GM12878 (cell line): ENCODE measurements at regions of chr6 and their contacts with region 1.

Region 1: DNA sequence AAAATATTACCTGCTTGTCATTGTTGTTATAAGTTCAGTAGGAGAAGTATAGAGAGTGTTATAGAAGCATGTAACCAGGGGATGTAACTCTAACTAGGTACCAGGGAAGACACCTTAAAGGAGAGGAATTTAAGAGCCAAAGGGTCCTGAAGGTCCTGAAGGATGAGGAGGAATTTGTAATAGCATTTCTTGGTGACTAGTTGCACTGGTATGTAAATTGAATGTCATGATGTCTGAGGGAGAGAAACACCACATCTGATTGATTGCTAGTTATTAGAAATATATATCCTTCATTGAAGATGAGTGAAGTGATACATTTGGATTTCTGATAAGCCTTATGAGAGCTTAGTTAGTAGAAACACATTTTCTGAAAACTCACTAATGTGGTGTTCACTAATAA is 643.8 kb downstream of the RFPL4B start:
- DNase-seq: no peak
- ATAC-seq: no peak
- H3K4me3 ChIP-seq: no peak overlapping the region
- H3K27ac ChIP-seq: no peak overlapping the region
- H3K4me1 ChIP-seq: no peaks in the 10 kb centered on the region
- H3K27me3 ChIP-seq: no peaks in the 10 kb centered on the region
- CTCF ChIP-seq: no peak
- EP300 ChIP-seq: no peak
- POLR2A ChIP-seq: no peak
- RAD21 ChIP-seq: no peak

Region 2: DNA sequence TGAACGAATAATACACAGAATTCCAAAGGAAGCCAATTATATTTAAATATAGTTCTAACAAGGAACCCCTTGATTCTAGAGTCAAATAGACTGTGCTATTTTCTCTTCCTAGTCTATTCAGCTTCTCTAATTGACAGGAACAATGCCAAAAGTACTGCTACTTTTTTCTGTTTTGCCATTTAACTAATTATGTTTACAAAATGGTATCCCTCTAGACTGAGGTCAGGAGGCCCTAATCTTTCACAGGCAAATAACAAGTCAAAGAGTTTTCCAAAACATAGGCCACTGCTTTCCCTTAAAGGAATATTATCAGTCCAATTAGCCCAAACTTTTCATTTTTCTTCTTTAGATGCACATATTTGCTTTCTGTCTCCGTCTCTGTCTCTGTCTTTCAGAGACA is 104.6 kb before region 1 on chr6:
- CTCF ChIA-PET with region 1: no interaction called
- POLR2A ChIA-PET with region 1: no interaction called
- RAD21 ChIA-PET with region 1: no interaction called
- SMC1A ChIA-PET with region 1: no interaction called
- in situ Hi-C with region 1: no loop called
- intact Hi-C with region 1: no loop called
- DNase-seq: no peak
- ATAC-seq: no peak
- H3K4me3 ChIP-seq: no peak overlapping the region
- H3K27ac ChIP-seq: no peak overlapping the region
- H3K4me1 ChIP-seq: no peaks in the 10 kb centered on the region
- H3K27me3 ChIP-seq: no peaks in the 10 kb centered on the region
- CTCF ChIP-seq: no peak
- EP300 ChIP-seq: no peak
- POLR2A ChIP-seq: no peak
- RAD21 ChIP-seq: no peak

Region 3: GRCh38 chr6:113048741-113049140 is 57.8 kb after region 1 on chr6:
- CTCF ChIA-PET with region 1: no interaction called
- POLR2A ChIA-PET with region 1: interaction called, 13 read pairs
- RAD21 ChIA-PET with region 1: no interaction called
- SMC1A ChIA-PET with region 1: no interaction called
- in situ Hi-C with region 1: no loop called
- intact Hi-C with region 1: no loop called
- DNase-seq: no peak
- ATAC-seq: no peak
- H3K4me3 ChIP-seq: no peak overlapping the region
- H3K27ac ChIP-seq: no peak overlapping the region
- H3K4me1 ChIP-seq: no peaks in the 10 kb centered on the region
- H3K27me3 ChIP-seq: no peaks in the 10 kb centered on the region; a peak in 2 of 4 replicates
- CTCF ChIP-seq: no peak
- EP300 ChIP-seq: no peak
- POLR2A ChIP-seq: no peak
- RAD21 ChIP-seq: no peak

Region 4: DNA sequence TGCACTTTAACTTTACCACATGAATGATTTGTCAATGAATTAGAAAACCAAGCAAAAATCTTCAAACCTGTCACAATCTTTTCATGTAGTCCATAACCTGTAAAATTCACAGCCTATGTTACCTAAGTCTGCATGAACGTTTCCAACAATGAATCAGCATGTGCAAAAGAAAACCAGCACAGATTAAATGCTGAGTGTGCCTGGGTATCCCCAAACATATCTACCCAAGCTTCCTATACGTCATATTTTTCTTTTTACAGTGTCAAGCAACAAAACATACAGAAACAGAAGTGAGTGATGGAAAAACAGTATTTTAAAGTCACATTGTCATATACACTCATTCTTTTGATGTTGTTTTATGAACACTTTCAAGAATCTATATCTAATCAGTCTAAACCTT is 69.7 kb after region 1 on chr6:
- CTCF ChIA-PET with region 1: no interaction called
- POLR2A ChIA-PET with region 1: no interaction called
- RAD21 ChIA-PET with region 1: no interaction called
- SMC1A ChIA-PET with region 1: no interaction called
- in situ Hi-C with region 1: no loop called
- intact Hi-C with region 1: no loop called
- DNase-seq: no peak
- ATAC-seq: peak; percentile 62
- H3K4me3 ChIP-seq: no peak overlapping the region
- H3K27ac ChIP-seq: no peak overlapping the region
- H3K4me1 ChIP-seq: no peaks in the 10 kb centered on the region
- H3K27me3 ChIP-seq: no peaks in the 10 kb centered on the region
- CTCF ChIP-seq: no peak
- EP300 ChIP-seq: no peak
- POLR2A ChIP-seq: no peak
- RAD21 ChIP-seq: no peak